A673 (cell line): ENCODE measurements at regions of chr6 and their contacts with region 1.

Region 1: GRCh38 chr6:30326526-30327260 is at the start of gene TRIM39:
- DNase-seq: peak; percentile 91
- H3K4me3 ChIP-seq: peak within 1 kb of the TSS; percentile 98
- H3K27ac ChIP-seq: peak within 1 kb of the TSS; percentile 99
- H3K4me1 ChIP-seq: peaks cover 19% of the 10 kb centered on the region
- H3K27me3 ChIP-seq: no peaks in the 10 kb centered on the region
- CTCF ChIP-seq: no peak
- total RNA-seq, gene TRIM39: 13.7 and 14.3 TPM in 2 replicates

Region 2: GRCh38 chr6:30212865-30213666 is 113.6 kb before region 1 on chr6 and contains the start of gene TRIM26:
- CTCF ChIA-PET with region 1: no interaction called
- POLR2A ChIA-PET with region 1: no interaction called
- intact Hi-C with region 1: loop called (anchors 10 kb)
- DNase-seq: peak; percentile 99
- H3K4me3 ChIP-seq: peak within 1 kb of the TSS; percentile 74
- H3K27ac ChIP-seq: peak within 1 kb of the TSS; percentile 82
- H3K4me1 ChIP-seq: peaks cover 22% of the 10 kb centered on the region
- H3K27me3 ChIP-seq: no peaks in the 10 kb centered on the region
- CTCF ChIP-seq: no peak
- total RNA-seq, gene TRIM26: 38.6 and 41.3 TPM in 2 replicates